Left colon (tissue), 2 donors: ENCODE measurements at regions of chr18 and their contacts with region 1.

Region 1: GRCh38 chr18:32470713-32471633 is at the start of gene GAREM1:
- DNase-seq: peak; percentile 94 to 97
- ATAC-seq: peak; percentile 90
- total RNA-seq, gene GAREM1: 21.9 to 23.6 TPM

Region 2: GRCh38 chr18:32158108-32158624 is 312.8 kb before region 1 on chr18:
- intact Hi-C with region 1: loop called in 1 of 2 experiments (anchors 5 kb)
- DNase-seq: peak; percentile 83 to 87
- ATAC-seq: peak; percentile 79

Region 3: DNA sequence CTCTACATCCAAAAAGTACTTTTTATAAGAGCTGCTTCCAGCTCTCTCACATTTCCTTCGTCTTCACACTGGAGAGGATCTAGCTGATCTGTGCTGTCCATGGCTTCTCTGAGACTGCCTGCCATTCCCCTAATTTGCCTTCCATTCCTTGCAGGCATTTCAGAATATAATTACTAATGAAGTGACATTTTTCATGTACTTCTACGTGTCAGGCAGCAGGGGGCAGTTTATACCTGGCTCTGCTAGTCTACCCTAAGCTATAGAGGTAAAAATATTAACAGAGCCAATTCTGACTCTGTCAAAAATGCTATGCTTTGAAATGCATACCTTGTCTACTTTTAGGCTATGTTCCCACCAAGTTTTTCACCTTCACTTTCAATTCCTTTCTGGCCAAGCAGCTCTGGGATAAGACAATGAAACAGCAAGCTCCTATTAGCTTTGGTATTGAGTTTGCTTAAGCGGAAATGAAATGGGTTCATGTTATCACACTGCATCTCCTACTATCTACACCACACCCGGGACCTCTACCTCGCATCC is 199.2 kb before region 1 on chr18:
- intact Hi-C with region 1: loop called in 1 of 2 experiments (anchors 5 kb)
- DNase-seq: no peak
- ATAC-seq: peak; percentile 65

Region 4: DNA sequence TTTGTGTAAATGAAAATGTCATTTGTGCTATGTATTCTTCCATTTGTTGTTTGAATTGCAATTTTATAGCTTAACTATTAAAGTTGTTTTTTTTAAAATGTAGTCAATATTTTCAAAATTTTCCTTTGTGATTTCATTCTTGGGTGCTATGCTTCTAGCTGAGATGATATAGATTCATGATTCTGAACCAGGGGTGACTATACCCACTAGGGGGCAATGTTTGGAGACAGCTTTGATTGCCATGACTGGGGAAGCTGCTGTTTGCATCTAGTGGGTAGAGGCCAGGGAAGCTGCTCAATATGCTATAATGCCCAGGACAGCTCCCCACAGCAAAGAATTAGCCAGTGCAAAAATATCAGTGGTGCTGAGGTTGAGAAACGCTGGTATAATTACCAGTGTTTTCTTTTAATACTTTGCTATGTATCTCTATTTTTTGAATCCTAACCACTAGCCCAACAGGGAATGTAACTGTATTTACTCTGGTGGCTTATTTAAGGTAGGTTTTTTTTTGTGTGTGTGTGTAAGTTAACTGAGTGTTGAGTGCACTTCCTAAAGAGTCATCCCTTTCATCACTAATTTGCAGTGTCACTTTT is 181.4 kb before region 1 on chr18:
- intact Hi-C with region 1: loop called (anchors 5 to 10 kb)
- DNase-seq: peak in 1 of 2 donors; percentile 35
- ATAC-seq: peak; percentile 91